ENCODE measurements at regions of chr1 and their contacts with region 1.

Region 1: GRCh38 chr1:229507951-229508822 is at the start of gene NUP133:
- DNase-seq: peak; percentile 99

Region 2: DNA sequence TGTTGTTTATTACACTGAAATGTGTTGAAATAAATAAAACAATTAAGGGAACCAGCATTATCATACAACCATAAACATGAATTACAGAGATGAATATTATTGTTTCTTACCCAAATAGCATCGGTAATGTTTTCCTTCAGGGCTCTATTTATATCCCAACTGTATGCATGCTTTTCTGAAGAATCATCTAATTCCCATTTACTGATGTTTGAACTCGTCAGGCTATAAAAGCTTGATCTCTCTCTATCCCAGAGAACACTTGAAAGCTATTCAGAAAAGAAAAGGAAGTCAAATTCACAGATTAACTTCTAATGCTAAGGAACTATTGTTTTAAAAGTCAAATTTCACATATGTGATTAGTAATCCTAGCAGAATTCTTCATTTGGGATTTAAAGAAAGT is 12.4 kb before region 1 on chr1:
- CTCF ChIA-PET with region 1: no interaction called
- POLR2A ChIA-PET with region 1: interaction called, 31 read pairs
- DNase-seq: no peak

Region 3: DNA sequence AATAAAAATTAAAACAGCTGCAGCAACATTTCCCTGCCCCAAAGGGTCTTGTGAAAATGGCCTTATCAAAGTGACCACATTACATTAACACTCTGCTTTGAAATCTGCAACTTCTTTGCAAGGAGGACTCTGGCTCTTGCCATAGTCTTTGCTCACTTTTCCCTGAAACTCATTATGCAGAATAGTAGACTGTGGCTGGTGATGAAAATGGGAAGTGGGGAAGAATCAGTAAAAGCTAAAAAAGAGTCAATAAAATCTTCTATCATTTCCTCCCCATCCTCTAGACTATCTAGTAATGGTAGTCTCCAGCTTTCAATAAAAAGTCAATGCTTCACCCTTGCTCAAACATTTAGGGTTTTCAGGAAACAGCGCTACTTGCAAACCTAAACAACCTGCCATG is 18.5 kb after region 1 on chr1:
- CTCF ChIA-PET with region 1: no interaction called
- POLR2A ChIA-PET with region 1: interaction called, 26 read pairs
- DNase-seq: no peak

Region 4: DNA sequence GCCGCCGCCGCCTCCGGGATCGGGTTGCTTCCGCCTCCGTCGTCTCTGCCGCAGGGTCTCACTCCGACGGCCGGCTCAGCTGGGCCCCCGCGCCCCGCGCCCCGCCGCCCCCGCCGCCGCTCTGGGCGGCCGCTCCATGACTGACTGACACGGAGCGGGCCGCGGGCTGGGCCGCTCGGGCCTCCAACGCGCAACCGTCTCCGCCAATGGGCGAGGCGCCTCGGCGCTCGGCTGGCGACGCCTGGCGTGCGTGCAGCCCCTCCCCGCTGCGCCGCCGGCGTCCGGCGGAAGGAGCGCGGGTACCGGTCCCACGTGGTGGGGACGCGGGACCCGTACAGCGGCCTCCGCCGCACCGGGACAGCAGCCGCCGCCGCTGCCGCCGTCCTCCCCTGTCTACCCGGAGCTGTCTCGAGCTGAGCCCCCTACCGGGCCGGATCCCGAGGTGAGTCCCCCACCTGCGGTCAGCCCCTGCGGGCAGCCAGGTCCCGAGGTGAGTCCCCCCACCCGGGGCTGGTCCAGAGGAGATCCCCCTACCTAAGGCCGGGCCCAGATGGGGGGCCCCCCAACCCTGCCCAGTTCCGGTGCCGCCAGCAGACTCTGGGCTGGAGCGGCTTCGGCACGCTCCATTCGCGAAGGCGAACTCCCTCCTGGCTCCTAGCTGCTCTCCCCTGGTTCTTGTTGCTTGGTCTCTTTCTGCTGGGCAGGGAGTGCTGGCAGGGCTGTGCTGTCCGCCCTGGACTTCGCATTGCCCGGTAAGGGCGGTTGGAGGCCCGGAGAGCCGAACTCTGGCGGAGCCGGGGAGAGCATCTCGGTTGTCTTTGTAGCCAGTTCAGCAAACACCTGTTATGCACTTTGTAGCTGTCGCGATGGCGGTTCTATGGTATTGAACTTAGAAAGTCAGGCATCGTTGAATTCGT is 118.0 kb after region 1 on chr1 and contains the starts of genes TAF5L and URB2:
- CTCF ChIA-PET with region 1: no interaction called
- POLR2A ChIA-PET with region 1: interaction called, 15 read pairs
- DNase-seq: peak; percentile 98

Measured in HEK293T (cell line).